Activated T-helper 1 cell treated with anti-CD3 and anti-CD28 coated beads, Interleukin-12 subunit alpha, Interleukin-12 subunit beta, Interleukin-2, Interleukin-4 antibody, amounts not matched to agents 30 ng/mL and 10 ng/mL and 1 ng/mL, durations not matched to agents 14 hours and 24 hours and 36 hours (primary cell): ENCODE measurements at regions of chr11 and their contacts with region 1.

Region 1: DNA sequence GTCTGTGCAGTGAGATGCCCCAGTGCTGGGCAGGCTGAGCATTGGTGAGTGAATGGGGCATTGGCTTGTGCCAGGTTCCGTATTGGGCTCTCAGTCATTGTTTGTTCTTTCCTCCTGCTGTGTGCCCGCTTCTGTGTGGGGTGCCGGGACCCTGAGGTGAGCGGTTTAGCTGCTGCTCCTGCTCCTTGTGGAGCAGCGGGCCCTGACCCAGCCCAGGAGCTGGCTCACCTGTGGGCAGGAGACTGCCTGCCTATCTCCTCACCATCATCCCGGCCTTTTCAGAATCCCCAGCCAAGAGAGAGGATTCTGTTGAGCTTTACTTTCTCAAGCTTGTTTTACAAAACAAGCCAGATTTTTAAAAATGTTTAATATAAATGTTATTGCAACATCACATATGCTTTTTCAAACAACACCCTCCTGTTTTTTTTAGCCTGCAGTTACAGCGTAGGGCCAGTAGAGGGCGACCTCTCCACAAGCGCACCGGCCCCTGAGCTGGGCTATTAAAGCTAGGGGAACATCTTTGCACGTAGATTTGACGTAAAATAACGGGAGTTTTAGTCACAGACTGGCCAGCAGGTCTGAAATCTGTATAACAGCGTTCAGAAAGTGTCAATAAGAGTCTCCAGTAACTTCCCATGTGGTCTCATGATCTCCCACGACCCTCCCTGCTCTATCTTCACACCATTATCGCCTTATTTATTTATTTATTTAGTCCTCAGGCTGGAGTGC is 25.1 kb upstream of the RELT start:
- DNase-seq: peak; percentile 46
- H3K4me3 Mint-ChIP-seq: no peak overlapping the region
- H3K27ac Mint-ChIP-seq: no peak overlapping the region
- H3K4me1 Mint-ChIP-seq: peaks cover 23% of the 10 kb centered on the region
- H3K27me3 Mint-ChIP-seq: peaks cover 8% of the 10 kb centered on the region

Region 2: GRCh38 chr11:73085189-73085875 is 265.7 kb before region 1 on chr11:
- intact Hi-C with region 1: no loop called
- DNase-seq: no peak
- H3K4me3 Mint-ChIP-seq: no peak overlapping the region
- H3K27ac Mint-ChIP-seq: no peak overlapping the region
- H3K4me1 Mint-ChIP-seq: peaks cover 21% of the 10 kb centered on the region
- H3K27me3 Mint-ChIP-seq: no peaks in the 10 kb centered on the region

Region 3: DNA sequence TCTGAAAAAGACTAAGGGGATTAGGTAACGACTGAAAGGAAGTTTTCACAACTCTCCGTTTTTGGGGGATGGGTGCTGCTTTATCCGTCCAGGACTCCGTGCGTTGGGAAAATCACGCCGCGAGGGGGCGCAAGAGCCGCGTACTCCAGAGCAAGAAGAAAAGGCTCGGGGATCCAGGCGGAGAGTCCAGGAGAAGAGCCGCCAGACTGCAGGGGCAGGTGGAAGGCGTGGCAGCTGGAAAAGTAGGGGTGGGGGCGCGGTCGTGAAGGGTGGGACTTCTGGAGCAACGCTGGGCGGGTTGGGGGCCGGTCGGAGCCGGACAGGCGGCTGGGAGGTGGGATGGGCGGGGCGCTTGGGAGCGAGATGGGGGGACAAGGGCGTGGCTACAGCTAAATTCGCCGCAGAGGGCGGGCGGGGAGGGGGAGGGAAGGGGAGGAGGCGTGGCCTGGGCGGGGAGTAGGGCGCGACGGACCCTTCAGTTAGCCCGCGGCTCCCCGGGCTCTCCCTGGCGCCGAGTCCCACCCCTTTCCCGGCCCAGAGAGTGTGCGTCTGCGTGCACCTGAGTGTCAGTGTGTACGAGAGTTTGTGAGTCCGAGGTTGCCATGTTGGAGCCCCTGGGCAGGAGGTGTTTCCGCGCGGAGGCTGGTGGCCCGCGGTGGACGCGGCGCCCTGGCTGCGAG is 43.6 kb before region 1 on chr11:
- intact Hi-C with region 1: loop called (anchors 1 kb)
- DNase-seq: peak; percentile 78
- H3K4me3 Mint-ChIP-seq: peak overlapping the region; percentile 87
- H3K27ac Mint-ChIP-seq: no peak overlapping the region
- H3K4me1 Mint-ChIP-seq: peaks cover 12% of the 10 kb centered on the region
- H3K27me3 Mint-ChIP-seq: peaks cover 39% of the 10 kb centered on the region

Region 4: DNA sequence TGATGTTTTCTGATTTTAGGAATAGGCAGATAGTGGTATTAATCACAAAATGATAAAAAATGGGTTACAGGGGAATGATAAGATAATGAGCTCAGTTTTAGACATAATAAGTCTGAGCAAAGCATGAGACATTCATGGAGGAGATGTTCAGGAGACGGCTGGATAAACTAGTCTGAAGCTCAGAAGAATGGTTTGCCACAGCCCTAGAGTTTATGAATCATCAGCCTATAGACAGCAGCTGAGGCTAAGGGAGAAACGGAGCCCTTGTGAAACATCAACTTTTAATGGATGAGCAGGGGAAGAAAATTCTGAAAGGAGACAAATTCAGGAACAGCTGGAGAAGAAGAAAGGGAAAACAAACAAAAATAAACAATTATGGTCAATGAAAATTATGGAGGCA is 112.3 kb after region 1 on chr11:
- intact Hi-C with region 1: no loop called
- DNase-seq: no peak
- H3K4me3 Mint-ChIP-seq: no peak overlapping the region
- H3K27ac Mint-ChIP-seq: no peak overlapping the region
- H3K4me1 Mint-ChIP-seq: no peaks in the 10 kb centered on the region
- H3K27me3 Mint-ChIP-seq: no peaks in the 10 kb centered on the region